ENCODE measurements at regions of chr1 and their contacts with region 1.

Region 1: GRCh38 chr1:78676347-78676982 is 26.8 kb downstream of the IFI44 start:
- DNase-seq: peak in 1 of 3 donors; percentile 25
- ATAC-seq: peak in 1 of 2 donors; percentile 60
- H3K4me3 ChIP-seq: no peak overlapping the region
- H3K27ac ChIP-seq: no peak overlapping the region
- H3K4me1 ChIP-seq: no peaks in the 10 kb centered on the region
- H3K27me3 ChIP-seq: no peaks in the 10 kb centered on the region

Region 2: GRCh38 chr1:78145105-78145580 is 531.3 kb before region 1 on chr1:
- intact Hi-C with region 1: loop called (anchors 5 to 10 kb)
- DNase-seq: peak in 2 of 3 donors; percentile 34 to 55
- ATAC-seq: peak; percentile 58 to 59
- H3K4me3 ChIP-seq: no peak overlapping the region
- H3K27ac ChIP-seq: no peak overlapping the region
- H3K4me1 ChIP-seq: no peaks in the 10 kb centered on the region
- H3K27me3 ChIP-seq: no peaks in the 10 kb centered on the region

Region 3: GRCh38 chr1:78617615-78618026 is 58.8 kb before region 1 on chr1:
- intact Hi-C with region 1: loop called (anchors 2 to 10 kb)
- DNase-seq: peak; percentile 60 to 74 (median 72)
- ATAC-seq: peak; percentile 85 to 94
- H3K4me3 ChIP-seq: peak overlapping the region; percentile 31
- H3K27ac ChIP-seq: peak overlapping the region; percentile 38
- H3K4me1 ChIP-seq: no peaks in the 10 kb centered on the region
- H3K27me3 ChIP-seq: no peaks in the 10 kb centered on the region

Region 4: DNA sequence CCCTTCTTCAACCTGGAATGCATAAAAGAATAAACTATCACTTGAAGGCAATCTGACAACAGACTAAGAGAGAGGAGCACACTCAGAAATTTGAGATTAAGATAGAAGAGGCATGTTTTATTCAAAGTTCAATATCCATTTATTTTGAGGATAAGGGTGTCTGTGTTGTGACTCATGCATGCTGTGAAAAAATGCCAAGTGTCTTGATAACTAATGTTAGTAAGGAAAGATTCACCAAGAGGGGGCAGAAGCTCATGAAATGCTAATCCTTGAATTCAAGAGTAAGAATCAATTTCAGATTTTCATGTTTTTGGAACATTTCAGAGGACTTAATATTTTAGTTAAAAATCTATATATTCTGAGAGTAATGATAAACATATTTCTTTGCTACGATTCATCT is 67.2 kb after region 1 on chr1:
- intact Hi-C with region 1: no loop called
- DNase-seq: no peak
- ATAC-seq: no peak
- H3K4me3 ChIP-seq: no peak overlapping the region
- H3K27ac ChIP-seq: no peak overlapping the region
- H3K4me1 ChIP-seq: no peaks in the 10 kb centered on the region
- H3K27me3 ChIP-seq: no peaks in the 10 kb centered on the region